ENCODE measurements at regions of chr12 and their contacts with region 1.

Region 1: DNA sequence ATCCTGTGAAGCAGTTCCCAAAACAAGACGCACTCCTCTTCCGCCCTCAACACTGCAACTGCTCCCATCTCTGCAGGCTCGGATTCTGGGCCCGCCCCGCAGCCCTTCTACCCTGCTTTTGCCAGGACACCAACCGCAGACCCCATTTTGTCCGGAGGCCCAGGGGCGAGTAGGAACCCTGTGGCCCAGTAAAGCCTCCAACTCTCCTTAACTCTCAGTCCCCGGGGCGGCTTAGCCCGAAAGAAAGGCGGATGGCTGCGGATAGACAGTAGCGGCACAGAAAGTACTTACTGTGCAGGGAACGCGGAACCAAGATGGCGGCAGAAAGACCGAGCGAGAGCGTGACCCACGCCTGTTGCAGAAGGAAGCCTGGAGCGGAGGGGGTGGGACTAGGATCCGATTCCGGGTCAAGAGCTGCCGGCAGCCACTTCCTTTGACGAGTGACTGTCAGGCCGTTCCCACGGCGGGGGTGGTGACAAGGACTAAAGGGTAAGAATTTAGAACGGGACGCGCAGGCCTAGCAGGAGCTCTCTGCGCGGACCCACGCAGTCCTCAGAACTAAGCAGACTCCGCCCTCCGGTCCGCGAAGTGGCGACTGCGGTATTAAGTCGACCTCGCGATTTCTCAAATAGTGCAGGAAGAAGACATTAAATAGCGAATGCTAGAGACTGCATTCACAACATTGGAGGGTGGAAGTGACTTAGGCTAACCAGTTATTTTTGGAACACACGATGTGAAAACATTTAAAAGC is at the start of gene NACA:
- DNase-seq: peak; percentile 94 to 99 (median 96)
- ATAC-seq: peak; percentile 93
- H3K4me3 ChIP-seq: peak within 1 kb of the TSS; percentile 97
- H3K4me3 Mint-ChIP-seq: peak within 1 kb of the TSS; percentile 98
- H3K27ac ChIP-seq: peak within 1 kb of the TSS; percentile 86 to 91
- H3K27ac Mint-ChIP-seq: peak within 1 kb of the TSS; percentile 92
- H3K4me1 ChIP-seq: peaks cover 49% of the 10 kb centered on the region
- H3K4me1 Mint-ChIP-seq: peaks cover 60% of the 10 kb centered on the region
- H3K27me3 ChIP-seq: no peaks in the 10 kb centered on the region
- H3K27me3 Mint-ChIP-seq: no peaks in the 10 kb centered on the region
- CTCF ChIP-seq: no peak
- total RNA-seq, gene NACA: 1,441 to 1,479 TPM

Region 2: DNA sequence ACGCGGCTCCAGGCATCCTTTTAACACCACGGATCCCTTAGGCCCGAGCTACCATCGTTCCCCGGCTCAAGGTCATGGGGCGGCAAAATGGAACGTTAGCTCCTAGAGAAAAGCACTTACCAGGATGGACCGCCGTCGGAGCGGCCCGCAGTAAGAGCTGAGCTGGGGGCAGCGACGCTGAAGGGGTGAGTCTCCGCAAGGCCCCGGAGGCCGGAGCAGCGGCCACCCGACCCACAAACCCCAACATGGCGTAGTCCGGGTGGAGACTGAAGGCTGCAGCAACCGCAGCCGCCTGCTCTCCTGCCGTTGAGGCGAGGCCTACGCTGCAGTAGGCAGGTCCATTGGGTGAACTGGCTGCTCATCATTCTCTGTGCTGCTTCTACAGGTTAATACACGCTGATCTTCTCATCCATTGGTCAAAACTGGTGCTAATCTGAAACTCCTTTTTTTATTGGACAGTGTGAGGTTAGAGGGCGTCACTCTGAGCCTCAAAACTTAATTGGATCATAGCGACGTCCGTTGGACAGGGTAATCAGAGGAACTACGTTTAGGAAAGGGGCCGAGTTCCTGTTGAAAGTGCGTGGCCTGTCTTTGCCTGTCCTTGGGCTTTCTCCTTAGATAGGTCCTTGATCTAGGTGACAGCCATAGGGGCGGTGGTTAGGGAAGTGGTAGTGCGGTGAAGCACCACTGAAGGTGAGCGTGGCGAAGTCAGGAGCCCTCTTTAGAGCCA is 79.3 kb before region 1 on chr12 and contains the start of gene ATP5F1B:
- CTCF ChIA-PET with region 1: no interaction called
- POLR2A ChIA-PET with region 1: interaction called, 30 read pairs
- intact Hi-C with region 1: loop called (anchors 1 to 2 kb)
- DNase-seq: peak; percentile 74 to 99 (median 84)
- ATAC-seq: peak; percentile 95
- H3K4me3 ChIP-seq: peak within 1 kb of the TSS; percentile 83
- H3K4me3 Mint-ChIP-seq: peak within 1 kb of the TSS; percentile 85
- H3K27ac ChIP-seq: peak within 1 kb of the TSS; percentile 86 to 91
- H3K27ac Mint-ChIP-seq: peak within 1 kb of the TSS; percentile 88
- H3K4me1 ChIP-seq: peaks cover 36% of the 10 kb centered on the region
- H3K4me1 Mint-ChIP-seq: peaks cover 34% of the 10 kb centered on the region
- H3K27me3 ChIP-seq: no peaks in the 10 kb centered on the region
- H3K27me3 Mint-ChIP-seq: no peaks in the 10 kb centered on the region
- CTCF ChIP-seq: no peak
- total RNA-seq, gene ATP5F1B: 305 to 318 TPM

Region 3: DNA sequence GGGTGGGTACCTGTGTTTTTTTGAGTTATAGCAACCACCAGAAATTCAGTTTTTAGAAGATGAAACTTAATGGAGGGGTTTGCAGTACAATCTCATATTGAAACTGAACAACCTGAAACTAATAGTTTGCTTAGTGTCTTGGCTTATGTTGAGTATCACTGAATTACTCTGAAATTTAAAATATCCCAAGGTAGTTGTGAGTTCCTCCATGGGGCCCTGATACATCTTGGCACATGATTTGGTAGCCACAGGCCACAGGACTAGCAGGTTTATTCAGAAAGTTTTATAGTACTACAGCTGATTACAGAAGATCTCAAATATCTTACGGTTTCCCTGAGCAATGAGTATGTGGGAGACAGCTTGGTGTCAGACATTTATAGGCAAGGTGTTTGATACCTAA is 47.5 kb before region 1 on chr12:
- CTCF ChIA-PET with region 1: interaction called, 3 read pairs
- POLR2A ChIA-PET with region 1: interaction called, 5 read pairs
- intact Hi-C with region 1: loop called in 1 of 2 experiments (anchors 10 kb)
- DNase-seq: no peak
- ATAC-seq: no peak
- H3K4me3 ChIP-seq: no peak overlapping the region
- H3K4me3 Mint-ChIP-seq: peak overlapping the region; percentile 35
- H3K27ac ChIP-seq: no peak overlapping the region
- H3K27ac Mint-ChIP-seq: peak overlapping the region; percentile 74
- H3K4me1 ChIP-seq: peaks cover 74% of the 10 kb centered on the region
- H3K4me1 Mint-ChIP-seq: peaks cover 58% of the 10 kb centered on the region
- H3K27me3 ChIP-seq: no peaks in the 10 kb centered on the region
- H3K27me3 Mint-ChIP-seq: no peaks in the 10 kb centered on the region
- CTCF ChIP-seq: no peak

Region 4: DNA sequence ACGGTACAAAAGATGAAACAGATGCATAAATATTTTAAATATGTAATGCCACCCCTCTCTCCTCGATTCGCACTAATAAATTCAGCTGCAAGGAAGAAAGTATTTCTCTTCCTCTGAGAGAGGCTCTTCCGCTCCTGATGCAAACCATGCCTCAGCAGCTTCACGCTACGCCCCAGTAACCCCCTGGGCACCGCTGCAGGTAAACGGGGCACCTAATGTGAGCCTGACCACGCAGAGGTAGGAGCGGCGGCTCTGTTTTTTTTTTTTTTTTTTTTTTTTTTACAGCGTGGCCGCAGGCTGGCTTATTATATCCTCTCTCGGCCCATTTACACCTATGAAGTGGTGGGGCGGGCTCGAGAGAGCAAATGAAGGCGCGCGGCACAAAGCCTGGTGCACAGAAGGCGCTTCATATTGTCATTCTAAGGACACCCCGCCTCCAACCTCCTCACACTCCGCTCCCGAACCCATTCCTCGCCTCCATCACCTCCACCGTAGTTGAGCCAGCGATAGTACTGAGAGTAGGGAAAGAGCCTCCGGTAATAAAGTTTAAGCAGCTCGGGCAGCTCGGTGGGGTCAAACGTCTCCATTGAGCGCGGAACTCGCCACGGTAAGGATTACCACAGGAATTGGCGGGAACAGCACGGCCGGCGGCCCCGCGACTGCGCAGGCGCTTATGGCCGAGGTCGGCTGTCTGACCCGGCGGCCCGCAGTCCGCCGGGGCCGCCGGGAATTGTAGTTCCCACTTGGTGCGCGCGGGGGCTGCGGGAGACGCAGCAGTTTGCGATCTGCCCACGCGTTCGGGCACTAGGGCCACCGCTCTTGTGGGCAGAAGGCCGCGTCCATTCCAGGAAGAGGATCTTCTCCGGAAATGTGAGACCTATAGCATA is 26.8 kb after region 1 on chr12 and contains the start of gene PRIM1:
- CTCF ChIA-PET with region 1: interaction called, 5 read pairs
- POLR2A ChIA-PET with region 1: interaction called, 25 read pairs
- intact Hi-C with region 1: loop called (anchors 1 kb)
- DNase-seq: peak; percentile 66 to 91 (median 78)
- ATAC-seq: peak; percentile 80
- H3K4me3 ChIP-seq: peak within 1 kb of the TSS; percentile 96
- H3K4me3 Mint-ChIP-seq: peak within 1 kb of the TSS; percentile 98
- H3K27ac ChIP-seq: peak within 1 kb of the TSS; percentile 68 to 80
- H3K27ac Mint-ChIP-seq: peak within 1 kb of the TSS; percentile 95
- H3K4me1 ChIP-seq: peaks cover 10% of the 10 kb centered on the region
- H3K4me1 Mint-ChIP-seq: peaks cover 33% of the 10 kb centered on the region
- H3K27me3 ChIP-seq: no peaks in the 10 kb centered on the region
- H3K27me3 Mint-ChIP-seq: no peaks in the 10 kb centered on the region
- CTCF ChIP-seq: peak; percentile 41
- total RNA-seq, gene PRIM1: 5.3 to 6.1 TPM

Measured in CD4-positive, alpha-beta T cell (primary cell).